ENCODE measurements at regions of chr12 and their contacts with region 1.

Region 1: DNA sequence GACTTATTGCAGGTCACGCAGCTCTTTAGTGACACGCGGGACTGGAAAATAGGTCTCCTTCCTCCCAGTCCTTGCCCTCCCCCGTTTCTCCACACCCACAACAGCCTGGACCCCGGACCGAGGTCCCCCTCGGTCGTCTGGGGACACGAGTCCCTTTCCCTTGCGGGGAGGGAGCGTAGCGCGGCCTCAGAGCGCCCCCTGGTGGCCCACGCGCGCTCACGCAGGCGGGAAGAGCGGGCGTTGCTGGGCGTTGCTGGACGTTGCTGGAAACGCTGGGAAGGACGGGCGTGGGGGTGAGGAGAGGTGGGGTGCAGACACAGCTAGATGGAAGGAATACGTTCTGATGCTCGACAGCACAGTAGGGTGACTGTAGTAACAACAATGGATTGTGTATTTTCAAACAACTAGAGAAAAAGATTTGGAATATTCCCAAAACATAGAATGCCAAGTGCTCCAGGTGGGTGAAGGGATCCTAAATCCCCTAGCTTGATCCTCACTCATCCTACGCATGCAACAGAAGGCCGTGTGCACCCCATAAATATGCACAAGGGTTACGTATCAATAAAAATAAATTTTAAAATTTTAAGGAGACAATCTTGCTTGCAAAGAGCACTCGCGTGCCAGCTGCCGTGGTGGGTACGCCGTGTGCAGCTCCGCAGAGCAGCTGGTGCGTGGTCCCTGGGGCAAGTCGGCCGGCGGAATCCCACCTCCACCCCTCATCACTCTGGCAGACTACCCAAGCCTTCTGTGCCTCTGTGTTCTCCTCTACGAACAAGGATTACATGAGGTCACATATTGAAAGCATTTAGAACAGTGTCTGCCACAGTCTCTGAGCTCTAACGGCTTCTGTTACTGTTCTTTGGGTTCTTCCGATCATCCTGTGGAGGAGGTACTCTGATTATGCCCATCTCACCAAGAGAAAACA is 87.4 kb downstream of the B4GALNT3 start:
- DNase-seq: peak; percentile 52 to 63 (median 54)
- H3K4me3 ChIP-seq: peak overlapping the region in 1 of 3 experiments; percentile 39
- H3K4me3 Mint-ChIP-seq: peak overlapping the region in 1 of 2 donors; percentile 67
- H3K27ac ChIP-seq: no peak overlapping the region
- H3K27ac Mint-ChIP-seq: no peak overlapping the region
- H3K4me1 ChIP-seq: peaks cover 14 to 26% of the 10 kb centered on the region in 2 donors
- H3K4me1 Mint-ChIP-seq: peaks cover 17% of the 10 kb centered on the region
- H3K27me3 ChIP-seq: peaks cover 0 to 7% of the 10 kb centered on the region in 2 donors
- H3K27me3 Mint-ChIP-seq: peaks cover 11 to 51% (median 13%) of the 10 kb centered on the region in 3 donors
- CTCF ChIP-seq: peak; percentile 99

Region 2: GRCh38 chr12:442235-442884 is 104.8 kb before region 1 on chr12:
- intact Hi-C with region 1: loop called (anchors 2 to 5 kb)
- DNase-seq: peak; percentile 15 to 33 (median 27)
- H3K4me3 ChIP-seq: no peak overlapping the region
- H3K4me3 Mint-ChIP-seq: no peak overlapping the region
- H3K27ac ChIP-seq: no peak overlapping the region
- H3K27ac Mint-ChIP-seq: no peak overlapping the region
- H3K4me1 ChIP-seq: no peaks in the 10 kb centered on the region
- H3K4me1 Mint-ChIP-seq: no peaks in the 10 kb centered on the region
- H3K27me3 ChIP-seq: no peaks in the 10 kb centered on the region
- H3K27me3 Mint-ChIP-seq: peaks cover 0 to 2% (median 0%) of the 10 kb centered on the region in 3 donors
- CTCF ChIP-seq: peak; percentile 82

Region 3: GRCh38 chr12:459430-460258 is 87.5 kb before region 1 on chr12 and contains the start of gene B4GALNT3:
- intact Hi-C with region 1: loop called in 1 of 2 experiments (anchors 5 kb)
- DNase-seq: no peak
- H3K4me3 ChIP-seq: peak within 1 kb of the TSS in 2 of 3 experiments; percentile 6 to 46
- H3K4me3 Mint-ChIP-seq: peak within 1 kb of the TSS; percentile 66 to 93
- H3K27ac ChIP-seq: no peak within 1 kb of the TSS
- H3K27ac Mint-ChIP-seq: peak within 1 kb of the TSS in 1 of 7 donors; percentile 14
- H3K4me1 ChIP-seq: peaks cover 3 to 13% of the 10 kb centered on the region in 2 donors
- H3K4me1 Mint-ChIP-seq: peaks cover 10% of the 10 kb centered on the region
- H3K27me3 ChIP-seq: peaks cover 48 to 66% of the 10 kb centered on the region in 2 donors
- H3K27me3 Mint-ChIP-seq: peaks cover 65 to 80% (median 69%) of the 10 kb centered on the region in 3 donors
- CTCF ChIP-seq: no peak
- polyA plus RNA-seq, gene B4GALNT3: 0.09 to 0.10 TPM in 2 of 3 donors, not detected in the other